Activated CD8-positive, alpha-beta T cell treated with anti-CD3 and anti-CD28 coated beads for 36 hours (primary cell): ENCODE measurements at regions of chr19 and their contacts with region 1.

Region 1: DNA sequence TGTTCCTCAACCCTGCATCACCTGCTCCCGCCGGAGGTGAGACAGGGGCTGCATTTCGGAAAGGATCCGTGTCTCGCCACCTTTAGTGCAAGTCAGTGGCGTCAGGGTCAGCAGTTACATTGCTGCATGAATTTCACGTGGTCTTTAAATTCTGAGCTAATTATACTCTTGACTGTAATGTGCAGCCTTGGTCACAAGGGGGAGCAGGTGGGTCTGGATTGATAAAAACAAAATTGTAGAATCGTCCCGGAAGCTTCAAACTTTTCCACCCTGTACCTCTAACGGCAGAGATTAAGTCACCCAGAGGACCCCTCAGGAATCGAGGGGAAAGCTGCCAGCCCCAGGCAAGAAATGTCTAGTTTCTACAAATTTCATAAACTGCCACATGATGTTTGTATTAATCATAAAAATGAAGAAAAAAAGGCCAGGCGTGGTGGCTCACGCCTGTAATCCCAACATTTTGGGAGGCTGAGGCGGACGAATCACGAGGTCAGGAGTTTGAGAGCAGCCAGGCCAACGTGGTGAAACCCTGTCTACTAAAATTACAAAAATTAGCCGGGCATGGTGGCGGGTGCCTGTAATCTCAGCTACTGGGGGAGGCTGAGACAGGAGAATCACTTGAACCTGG is 20.2 kb downstream of the BBC3 start:
- DNase-seq: peak; percentile 95
- ATAC-seq: peak; percentile 97
- H3K4me3 Mint-ChIP-seq: no peak overlapping the region
- H3K27ac Mint-ChIP-seq: peak overlapping the region; percentile 83
- H3K4me1 Mint-ChIP-seq: peaks cover 14% of the 10 kb centered on the region
- H3K27me3 Mint-ChIP-seq: no peaks in the 10 kb centered on the region
- CTCF ChIP-seq: peak; percentile 85

Region 2: GRCh38 chr19:47152224-47153017 is 58.4 kb before region 1 on chr19:
- CTCF ChIA-PET with region 1: interaction called, 44 read pairs
- POLR2A ChIA-PET with region 1: interaction called, 3 read pairs
- intact Hi-C with region 1: no loop called
- DNase-seq: no peak
- ATAC-seq: no peak
- H3K4me3 Mint-ChIP-seq: no peak overlapping the region
- H3K27ac Mint-ChIP-seq: peak overlapping the region; percentile 23
- H3K4me1 Mint-ChIP-seq: peaks cover 45% of the 10 kb centered on the region
- H3K27me3 Mint-ChIP-seq: no peaks in the 10 kb centered on the region
- CTCF ChIP-seq: no peak

Region 3: GRCh38 chr19:47176627-47177090 is 34.1 kb before region 1 on chr19:
- CTCF ChIA-PET with region 1: interaction called, 15 read pairs
- POLR2A ChIA-PET with region 1: interaction called, 3 read pairs
- intact Hi-C with region 1: no loop called
- DNase-seq: peak; percentile 62
- ATAC-seq: peak; percentile 79
- H3K4me3 Mint-ChIP-seq: peak overlapping the region; percentile 26
- H3K27ac Mint-ChIP-seq: peak overlapping the region; percentile 89
- H3K4me1 Mint-ChIP-seq: peaks cover 62% of the 10 kb centered on the region
- H3K27me3 Mint-ChIP-seq: no peaks in the 10 kb centered on the region
- CTCF ChIP-seq: no peak

Region 4: GRCh38 chr19:47225746-47226425 is 15.1 kb after region 1 on chr19:
- CTCF ChIA-PET with region 1: interaction called, 65 read pairs
- POLR2A ChIA-PET with region 1: interaction called, 19 read pairs
- intact Hi-C with region 1: no loop called
- DNase-seq: peak; percentile 86
- ATAC-seq: peak; percentile 63
- H3K4me3 Mint-ChIP-seq: peak overlapping the region; percentile 82
- H3K27ac Mint-ChIP-seq: peak overlapping the region; percentile 72
- H3K4me1 Mint-ChIP-seq: peaks cover 8% of the 10 kb centered on the region
- H3K27me3 Mint-ChIP-seq: no peaks in the 10 kb centered on the region
- CTCF ChIP-seq: peak; percentile 49

Region 5: DNA sequence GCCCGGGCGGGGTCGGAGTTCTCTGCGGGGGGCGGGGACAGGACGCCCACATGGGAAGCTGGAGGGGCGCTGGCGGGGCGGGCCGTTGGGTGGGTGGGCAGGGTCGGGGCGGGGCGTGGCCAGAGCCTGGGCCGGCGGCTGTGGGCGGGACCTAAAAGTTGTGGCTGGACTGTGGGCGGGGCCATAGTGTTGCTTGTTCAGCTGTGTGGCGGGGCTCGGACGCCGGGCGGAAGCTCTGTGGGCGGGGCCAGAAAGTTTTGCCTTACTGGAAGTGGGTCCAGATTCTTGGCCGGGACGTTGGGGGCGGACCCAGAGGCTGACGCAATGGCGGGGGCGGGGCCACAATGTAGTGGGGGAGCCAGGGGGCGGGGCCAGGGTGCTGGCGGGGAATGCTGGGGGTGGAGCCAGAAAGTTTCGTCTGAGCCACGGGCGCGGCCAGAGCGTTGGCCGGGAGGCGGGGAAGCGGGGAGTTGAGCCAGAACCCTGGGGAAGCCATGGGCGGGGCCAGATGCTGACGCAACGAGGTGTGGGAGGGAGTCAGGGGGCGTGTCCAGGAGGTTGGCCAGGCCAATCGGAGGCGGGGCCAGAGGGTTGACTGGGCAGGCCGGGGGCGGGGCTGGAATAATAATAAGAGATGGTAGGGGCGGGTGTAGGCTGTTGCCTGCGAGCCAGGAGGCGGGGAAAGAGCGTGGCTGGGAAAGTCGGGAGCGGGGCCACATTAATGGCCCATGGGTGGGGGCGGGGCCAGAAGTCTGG is 46.1 kb after region 1 on chr19:
- CTCF ChIA-PET with region 1: interaction called, 399 read pairs
- POLR2A ChIA-PET with region 1: interaction called, 3 read pairs
- intact Hi-C with region 1: no loop called
- DNase-seq: peak; percentile 100
- ATAC-seq: peak; percentile 83
- H3K4me3 Mint-ChIP-seq: peak overlapping the region; percentile 84
- H3K27ac Mint-ChIP-seq: peak overlapping the region; percentile 98
- H3K4me1 Mint-ChIP-seq: peaks cover 36% of the 10 kb centered on the region
- H3K27me3 Mint-ChIP-seq: no peaks in the 10 kb centered on the region
- CTCF ChIP-seq: no peak